T-cell (primary cell): ENCODE measurements at regions of chr6 and their contacts with region 1.

Region 1: DNA sequence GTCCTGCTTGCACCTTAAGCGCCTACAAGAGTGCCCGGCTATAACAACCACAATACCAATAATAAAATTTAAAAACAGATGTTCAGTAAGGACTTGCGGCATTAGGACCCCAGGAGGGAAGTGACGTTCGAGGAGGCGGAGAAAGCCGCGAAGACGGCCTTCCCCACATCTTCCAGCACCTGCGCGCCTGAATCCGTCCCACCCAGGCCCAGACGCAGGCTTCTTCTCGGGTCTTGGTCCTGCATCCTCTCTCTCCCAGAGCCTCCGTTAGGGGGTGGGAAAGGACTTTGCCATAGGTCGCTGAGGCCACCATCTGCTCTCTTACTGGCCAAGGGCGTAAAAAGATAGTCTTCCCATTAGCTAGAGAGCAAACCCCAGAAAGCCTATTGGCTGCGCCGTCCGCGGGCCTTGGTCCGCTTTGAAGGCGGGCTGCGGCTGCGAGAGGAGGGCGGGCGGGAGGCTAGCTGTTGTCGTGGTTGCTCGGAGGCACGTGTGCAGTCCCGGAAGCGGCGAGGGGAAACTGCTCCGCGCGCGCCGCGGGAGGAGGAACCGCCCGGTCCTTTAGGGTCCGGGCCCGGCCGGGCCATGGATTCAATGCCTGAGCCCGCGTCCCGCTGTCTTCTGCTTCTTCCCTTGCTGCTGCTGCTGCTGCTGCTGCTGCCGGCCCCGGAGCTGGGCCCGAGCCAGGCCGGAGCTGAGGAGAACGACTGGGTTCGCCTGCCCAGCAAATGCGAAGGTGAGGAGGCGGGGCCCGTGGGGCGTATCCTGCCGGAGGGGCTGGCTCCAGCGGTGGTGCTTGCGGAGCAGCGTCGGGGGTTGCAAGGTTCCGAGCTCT is at the start of gene CNPY3:
- DNase-seq: peak; percentile 85 to 98 (median 93)
- ATAC-seq: peak; percentile 85 to 87 (median 86)
- H3K4me3 ChIP-seq: peak within 1 kb of the TSS; percentile 77 to 84
- H3K4me3 Mint-ChIP-seq: peak within 1 kb of the TSS; percentile 86 to 99 (median 96)
- H3K27ac ChIP-seq: peak within 1 kb of the TSS; percentile 94
- H3K27ac Mint-ChIP-seq: peak within 1 kb of the TSS; percentile 98 to 99
- H3K4me1 ChIP-seq: peaks cover 16 to 53% of the 10 kb centered on the region in 2 experiments
- H3K4me1 Mint-ChIP-seq: peaks cover 42 to 51% (median 51%) of the 10 kb centered on the region in 3 donors
- H3K27me3 ChIP-seq: no peaks in the 10 kb centered on the region
- H3K27me3 Mint-ChIP-seq: no peaks in the 10 kb centered on the region
- total RNA-seq, gene CNPY3: 51.2 to 86.2 (median 79.4) TPM

Region 2: DNA sequence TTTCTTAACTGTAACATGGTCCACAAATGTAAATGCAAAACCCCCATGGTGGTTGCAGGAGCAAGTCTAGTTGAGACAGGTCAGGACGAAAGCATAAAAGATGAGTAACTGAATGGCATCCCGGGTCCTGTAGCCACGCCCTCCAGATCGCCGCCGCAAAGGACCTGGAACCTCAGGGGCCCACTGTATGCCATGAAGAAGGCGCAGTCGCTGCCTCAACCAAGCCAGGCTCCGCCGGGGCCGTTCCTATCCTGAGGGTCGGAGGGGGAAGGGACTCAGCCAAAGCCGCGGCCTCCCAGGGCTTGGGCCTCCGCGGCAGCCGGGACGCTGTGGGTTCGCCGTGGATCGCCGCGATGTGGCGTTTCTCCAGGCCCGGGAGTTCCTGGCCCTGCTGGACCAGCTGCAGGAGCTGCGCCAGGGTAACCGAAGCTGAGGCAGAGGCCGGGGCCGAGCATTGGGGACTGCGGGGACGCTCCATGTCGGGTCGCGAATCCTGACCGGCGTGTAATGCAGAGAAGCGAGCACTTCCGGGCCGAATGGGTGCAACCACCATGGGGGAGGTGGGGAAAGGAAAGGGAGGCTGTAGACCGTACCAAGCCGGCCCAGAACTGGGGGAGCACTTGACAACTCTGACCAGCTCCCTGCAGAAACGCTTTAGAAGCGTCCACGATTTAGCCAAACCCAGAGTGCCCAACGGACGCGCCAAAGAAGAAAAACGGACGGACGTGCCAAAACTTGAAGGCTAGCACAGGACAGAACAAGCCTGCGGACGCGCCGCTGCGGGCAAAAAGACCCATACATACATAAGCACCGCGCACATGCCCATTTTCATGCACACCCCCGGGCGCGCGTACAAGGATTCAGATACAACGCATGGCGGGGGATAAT is 38.6 kb before region 1 on chr6:
- CTCF ChIA-PET with region 1: no interaction called
- POLR2A ChIA-PET with region 1: interaction called in 1 of 2 experiments, 14 read pairs
- DNase-seq: peak; percentile 73 to 90 (median 84)
- ATAC-seq: peak; percentile 93 to 97 (median 96)
- H3K4me3 ChIP-seq: peak overlapping the region; percentile 84 to 91
- H3K4me3 Mint-ChIP-seq: peak overlapping the region; percentile 88 to 96 (median 92)
- H3K27ac ChIP-seq: peak overlapping the region; percentile 76
- H3K27ac Mint-ChIP-seq: peak overlapping the region; percentile 96 to 99
- H3K4me1 ChIP-seq: peaks cover 9 to 13% of the 10 kb centered on the region in 2 experiments
- H3K4me1 Mint-ChIP-seq: peaks cover 5 to 20% (median 18%) of the 10 kb centered on the region in 3 donors
- H3K27me3 ChIP-seq: no peaks in the 10 kb centered on the region
- H3K27me3 Mint-ChIP-seq: no peaks in the 10 kb centered on the region

Region 3: DNA sequence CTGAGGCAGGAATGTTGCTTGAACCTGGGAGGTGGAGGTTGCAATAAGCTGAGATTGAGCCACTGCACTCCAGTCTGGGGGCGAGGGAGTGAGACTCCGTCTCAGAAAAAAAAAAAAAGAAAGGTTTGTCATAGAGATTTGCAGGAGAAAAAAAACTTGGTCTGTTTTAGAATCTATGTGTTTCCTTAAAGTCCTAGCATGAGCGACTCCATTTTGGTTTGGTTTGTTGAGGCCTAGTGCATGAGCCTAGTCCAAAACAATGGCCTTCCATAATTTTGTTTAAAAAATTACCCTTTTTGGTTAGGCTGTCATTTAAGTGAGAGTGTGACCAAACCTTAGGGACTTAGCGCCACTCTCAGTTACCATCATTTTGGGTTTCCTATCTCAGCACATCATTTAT is 23.2 kb after region 1 on chr6:
- CTCF ChIA-PET with region 1: no interaction called
- POLR2A ChIA-PET with region 1: no interaction called
- DNase-seq: no peak
- ATAC-seq: no peak
- H3K4me3 ChIP-seq: no peak overlapping the region
- H3K4me3 Mint-ChIP-seq: no peak overlapping the region
- H3K27ac ChIP-seq: no peak overlapping the region
- H3K27ac Mint-ChIP-seq: no peak overlapping the region
- H3K4me1 ChIP-seq: no peaks in the 10 kb centered on the region
- H3K4me1 Mint-ChIP-seq: no peaks in the 10 kb centered on the region
- H3K27me3 ChIP-seq: no peaks in the 10 kb centered on the region
- H3K27me3 Mint-ChIP-seq: no peaks in the 10 kb centered on the region

Region 4: GRCh38 chr6:42963855-42964605 is 34.8 kb after region 1 on chr6:
- CTCF ChIA-PET with region 1: interaction called in 1 of 2 experiments, 3 read pairs
- POLR2A ChIA-PET with region 1: interaction called in 1 of 2 experiments, 12 read pairs
- DNase-seq: peak in 7 of 35 experiments; percentile 15 to 52 (median 28)
- ATAC-seq: peak in 2 of 4 experiments; percentile 22 to 44
- H3K4me3 ChIP-seq: no peak overlapping the region
- H3K4me3 Mint-ChIP-seq: no peak overlapping the region
- H3K27ac ChIP-seq: no peak overlapping the region
- H3K27ac Mint-ChIP-seq: no peak overlapping the region
- H3K4me1 ChIP-seq: peaks cover 2 to 17% of the 10 kb centered on the region in 2 experiments
- H3K4me1 Mint-ChIP-seq: peaks cover 21 to 25% (median 22%) of the 10 kb centered on the region in 3 donors
- H3K27me3 ChIP-seq: peaks cover 0 to 19% of the 10 kb centered on the region in 2 experiments
- H3K27me3 Mint-ChIP-seq: no peaks in the 10 kb centered on the region

Region 5: GRCh38 chr6:42978839-42979522 is 49.8 kb after region 1 on chr6 and contains the start of gene PEX6:
- CTCF ChIA-PET with region 1: interaction called in 1 of 2 experiments, 6 read pairs
- POLR2A ChIA-PET with region 1: interaction called, 6 to 22 read pairs
- DNase-seq: peak; percentile 88 to 98 (median 95)
- ATAC-seq: peak; percentile 94 to 96 (median 95)
- H3K4me3 ChIP-seq: peak within 1 kb of the TSS; percentile 72 to 85
- H3K4me3 Mint-ChIP-seq: peak within 1 kb of the TSS; percentile 88 to 93 (median 92)
- H3K27ac ChIP-seq: peak within 1 kb of the TSS; percentile 85
- H3K27ac Mint-ChIP-seq: peak within 1 kb of the TSS; percentile 97 to 99
- H3K4me1 ChIP-seq: peaks cover 23 to 48% of the 10 kb centered on the region in 2 experiments
- H3K4me1 Mint-ChIP-seq: peaks cover 48 to 54% (median 49%) of the 10 kb centered on the region in 3 donors
- H3K27me3 ChIP-seq: no peaks in the 10 kb centered on the region
- H3K27me3 Mint-ChIP-seq: no peaks in the 10 kb centered on the region
- total RNA-seq, gene PEX6: 20.5 to 30.5 (median 27.4) TPM

Region 6: GRCh38 chr6:42984001-42984923 is 55.1 kb after region 1 on chr6 and contains the start of gene PPP2R5D:
- CTCF ChIA-PET with region 1: interaction called in 1 of 2 experiments, 6 read pairs
- POLR2A ChIA-PET with region 1: interaction called, 6 to 22 read pairs
- DNase-seq: peak; percentile 92 to 99 (median 98)
- ATAC-seq: peak; percentile 91 to 95 (median 92)
- H3K4me3 ChIP-seq: peak within 1 kb of the TSS; percentile 74 to 79
- H3K4me3 Mint-ChIP-seq: peak within 1 kb of the TSS; percentile 89 to 95 (median 92)
- H3K27ac ChIP-seq: peak within 1 kb of the TSS; percentile 87
- H3K27ac Mint-ChIP-seq: peak within 1 kb of the TSS; percentile 94 to 96
- H3K4me1 ChIP-seq: peaks cover 14 to 48% of the 10 kb centered on the region in 2 experiments
- H3K4me1 Mint-ChIP-seq: peaks cover 54 to 68% (median 66%) of the 10 kb centered on the region in 3 donors
- H3K27me3 ChIP-seq: no peaks in the 10 kb centered on the region
- H3K27me3 Mint-ChIP-seq: no peaks in the 10 kb centered on the region
- total RNA-seq, gene PPP2R5D: 27.8 to 35.1 (median 33.3) TPM

Region 7: GRCh38 chr6:42996513-42996912 is 67.3 kb after region 1 on chr6:
- CTCF ChIA-PET with region 1: no interaction called
- POLR2A ChIA-PET with region 1: no interaction called
- DNase-seq: no peak
- ATAC-seq: no peak
- H3K4me3 ChIP-seq: no peak overlapping the region
- H3K4me3 Mint-ChIP-seq: no peak overlapping the region
- H3K27ac ChIP-seq: no peak overlapping the region
- H3K27ac Mint-ChIP-seq: peak overlapping the region in 1 of 2 donors; percentile 41
- H3K4me1 ChIP-seq: no peaks in the 10 kb centered on the region
- H3K4me1 Mint-ChIP-seq: peaks cover 4 to 10% (median 5%) of the 10 kb centered on the region in 3 donors
- H3K27me3 ChIP-seq: no peaks in the 10 kb centered on the region
- H3K27me3 Mint-ChIP-seq: no peaks in the 10 kb centered on the region

Region 8: GRCh38 chr6:43013843-43014433 is 84.7 kb after region 1 on chr6 and contains the starts of genes KLHDC3 and MEA1:
- CTCF ChIA-PET with region 1: interaction called in 1 of 2 experiments, 22 read pairs
- POLR2A ChIA-PET with region 1: interaction called, 8 to 10 read pairs
- DNase-seq: peak; percentile 95 to 99 (median 98)
- ATAC-seq: peak; percentile 89 to 95 (median 93)
- H3K4me3 ChIP-seq: peak within 1 kb of the TSS; percentile 68
- H3K4me3 Mint-ChIP-seq: peak within 1 kb of the TSS; percentile 93 to 95 (median 94)
- H3K27ac ChIP-seq: peak within 1 kb of the TSS; percentile 40
- H3K27ac Mint-ChIP-seq: peak within 1 kb of the TSS; percentile 91
- H3K4me1 ChIP-seq: peaks cover 14 to 46% of the 10 kb centered on the region in 2 experiments
- H3K4me1 Mint-ChIP-seq: peaks cover 58 to 69% (median 62%) of the 10 kb centered on the region in 3 donors
- H3K27me3 ChIP-seq: no peaks in the 10 kb centered on the region
- H3K27me3 Mint-ChIP-seq: no peaks in the 10 kb centered on the region
- total RNA-seq, gene KLHDC3: 40.5 to 75.3 (median 66.9) TPM
- total RNA-seq, gene MEA1: 20.5 to 38.7 (median 34.0) TPM